Right ventricle myocardium inferior (tissue), 1 donor: ENCODE measurements at regions of chr17 and their contacts with region 1.

Region 1: DNA sequence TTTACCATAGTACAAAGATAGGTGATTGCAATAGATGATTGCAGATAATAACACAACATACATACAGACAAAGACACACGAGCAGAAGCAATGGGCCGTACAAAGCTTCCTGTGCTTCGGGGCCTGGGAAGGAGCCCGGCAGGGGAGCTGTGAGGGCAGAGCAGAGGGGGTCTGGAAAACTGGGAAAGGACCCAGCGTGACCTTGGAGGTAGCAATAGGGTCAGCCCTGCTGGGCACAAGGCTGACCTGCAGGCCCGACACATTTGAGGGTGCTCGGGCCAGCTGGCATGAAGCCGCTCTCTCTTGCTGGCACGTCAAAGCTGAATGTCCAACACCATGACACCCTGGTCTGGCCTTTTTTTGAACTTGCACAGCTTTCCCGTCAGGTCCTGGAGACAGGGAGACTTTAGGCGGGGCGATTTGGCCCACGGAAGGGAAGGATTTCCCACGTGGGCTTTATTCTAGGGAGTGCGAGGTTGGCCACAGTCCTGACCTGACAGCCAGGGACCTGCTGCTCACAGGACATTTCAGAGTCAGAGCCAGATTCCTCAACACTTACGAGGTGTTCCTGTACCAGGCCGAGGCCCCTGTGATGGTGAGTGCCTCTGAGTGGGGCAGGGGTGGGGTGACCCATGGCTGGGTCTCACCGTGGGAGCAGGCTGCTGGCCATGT is 83.2 kb downstream of the NTN1 start:
- DNase-seq: peak; percentile 88
- ATAC-seq: peak; percentile 93

Region 2: DNA sequence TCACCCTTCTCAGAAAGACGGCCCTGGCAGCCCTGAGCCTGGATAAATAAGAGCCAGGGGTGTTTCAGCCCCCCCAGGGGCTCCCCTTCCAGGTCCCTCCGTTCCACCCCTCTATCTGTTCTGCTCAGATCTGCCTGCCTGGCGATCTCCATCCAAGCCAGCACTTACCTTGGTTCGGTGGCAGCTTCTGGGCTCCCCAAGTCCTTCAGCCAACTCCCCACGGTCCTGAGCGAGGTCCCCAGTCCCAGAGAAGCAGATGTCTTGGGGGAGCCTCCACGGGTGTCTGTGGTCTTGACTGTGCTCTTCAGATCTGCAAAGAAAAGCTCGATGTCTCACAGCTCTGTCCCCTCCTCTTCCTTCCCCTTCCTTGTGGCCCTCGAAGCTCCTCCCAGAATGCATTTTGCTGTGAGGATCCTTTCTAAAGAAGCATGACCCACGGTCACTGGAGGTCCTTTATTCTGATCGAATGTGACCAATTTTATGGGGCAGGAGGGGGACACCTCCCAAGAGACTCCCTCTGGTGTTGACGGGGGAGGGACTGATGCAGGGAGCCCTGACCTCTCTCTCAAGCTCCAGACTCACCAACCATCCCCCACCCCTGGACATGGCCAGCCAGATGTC is 237.0 kb before region 1 on chr17 and contains the start of gene PIK3R6:
- intact Hi-C with region 1: no loop called
- DNase-seq: no peak
- ATAC-seq: no peak
- total RNA-seq, gene PIK3R6: 0.78 TPM

Region 3: GRCh38 chr17:8976638-8977037 is 127.9 kb before region 1 on chr17:
- intact Hi-C with region 1: no loop called
- DNase-seq: no peak
- ATAC-seq: no peak

Region 4: DNA sequence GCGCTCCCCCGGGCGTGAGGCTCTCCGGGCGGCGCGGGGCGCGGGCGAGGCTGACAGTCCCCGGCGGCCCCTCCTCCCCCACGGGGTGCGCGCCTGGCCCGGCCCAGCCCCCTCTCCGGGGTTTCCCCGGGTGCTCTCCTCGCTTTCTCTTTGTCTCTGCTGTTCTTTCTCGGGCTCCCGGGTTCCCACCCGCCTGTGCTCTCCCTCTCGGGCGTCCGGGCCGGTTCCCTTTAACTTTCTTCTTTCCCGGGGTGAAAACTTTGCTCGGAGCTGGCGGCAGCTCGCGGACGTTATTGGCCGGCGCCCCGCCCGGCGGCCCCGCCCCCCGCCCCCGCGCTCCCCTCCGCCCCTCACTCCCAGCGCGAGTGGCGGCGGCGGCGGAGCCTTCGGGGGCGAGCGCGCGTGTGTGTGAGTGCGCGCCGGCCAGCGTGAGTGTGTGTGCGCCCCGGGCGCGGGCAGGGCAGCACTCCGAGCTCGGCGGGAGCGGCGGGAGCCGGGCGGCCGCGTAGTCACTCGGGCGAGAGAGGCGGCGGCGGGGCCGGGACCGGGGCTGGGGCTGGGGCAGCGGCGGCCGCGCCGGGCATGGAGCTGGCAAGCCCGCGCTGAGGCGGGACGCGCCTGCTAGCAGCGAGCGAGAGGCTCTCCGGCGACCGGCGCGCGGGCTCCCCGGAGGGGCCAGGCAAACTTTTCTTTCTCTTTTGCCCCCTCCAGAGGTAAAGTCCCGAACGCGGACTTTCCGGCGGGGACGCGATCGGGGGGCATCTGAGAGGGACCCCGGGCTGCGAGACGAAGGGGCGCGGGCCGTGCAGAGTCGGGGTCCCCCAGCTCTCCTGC is 83.1 kb before region 1 on chr17 and contains the start of gene NTN1:
- intact Hi-C with region 1: loop called (anchors 5 kb)
- DNase-seq: peak; percentile 72
- ATAC-seq: peak; percentile 79
- total RNA-seq, gene NTN1: 24.5 TPM

Region 5: GRCh38 chr17:9138101-9138717 is 33.7 kb after region 1 on chr17:
- intact Hi-C with region 1: loop called (anchors 1 kb)
- DNase-seq: peak; percentile 67
- ATAC-seq: peak; percentile 92

Region 6: GRCh38 chr17:9291912-9292560 is 187.5 kb after region 1 on chr17:
- intact Hi-C with region 1: loop called (anchors 10 kb)
- DNase-seq: peak; percentile 70
- ATAC-seq: peak; percentile 86